GM18951 (cell line): ENCODE measurements at regions of chr1 and their contacts with region 1.

Region 1: GRCh38 chr1:43414634-43415223 is 25.0 kb downstream of the SZT2 start:
- POLR2A ChIP-seq: no peak

Region 2: GRCh38 chr1:43227143-43227764 is 187.5 kb before region 1 on chr1:
- in situ Hi-C with region 1: loop called (anchors 5 kb)
- POLR2A ChIP-seq: no peak

Region 3: DNA sequence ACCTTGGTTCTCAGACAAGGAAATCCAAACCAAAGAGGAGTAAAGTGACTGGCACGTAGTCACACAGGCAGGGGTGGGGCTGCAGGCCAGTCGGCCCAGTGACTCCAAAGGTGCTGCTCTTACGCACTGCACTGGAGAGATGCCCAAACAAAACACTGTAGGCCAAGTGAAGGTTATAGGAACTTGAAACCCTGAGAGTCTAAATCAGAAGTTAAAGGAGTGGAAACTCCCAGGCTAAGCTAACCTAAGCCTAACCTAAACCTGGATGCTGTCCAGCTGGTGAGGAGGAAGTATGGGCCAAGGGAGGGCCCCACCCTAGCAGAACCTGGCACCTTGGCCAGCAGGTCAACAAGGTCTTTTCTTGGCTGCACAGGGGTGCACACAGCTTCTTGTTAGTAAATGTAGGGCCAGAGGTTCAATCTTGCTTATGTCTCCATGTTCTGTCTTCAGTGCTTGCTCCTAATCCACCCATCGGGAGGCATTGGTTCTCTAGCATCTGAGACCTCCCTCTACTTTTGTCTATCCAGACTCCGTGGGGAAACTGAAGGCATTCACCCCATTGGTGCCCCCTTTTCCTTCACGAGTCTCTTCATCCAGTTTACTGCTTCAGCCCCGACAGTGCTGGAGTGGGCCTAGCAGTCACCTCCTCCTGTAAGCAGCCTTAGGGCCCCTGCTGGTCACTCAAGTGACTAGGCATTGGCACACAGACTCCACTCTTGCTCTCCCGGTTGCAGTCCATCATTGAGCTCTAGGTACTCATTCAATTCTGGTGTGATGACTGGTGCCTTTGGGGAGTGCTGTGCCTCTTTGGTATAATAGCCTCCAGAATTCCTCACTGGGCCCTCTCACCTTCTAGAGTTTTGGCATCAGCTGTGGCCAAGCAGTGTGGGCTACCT is 157.8 kb before region 1 on chr1:
- in situ Hi-C with region 1: no loop called
- POLR2A ChIP-seq: no peak